ENCODE measurements at regions of chr18 and their contacts with region 1.

Region 1: DNA sequence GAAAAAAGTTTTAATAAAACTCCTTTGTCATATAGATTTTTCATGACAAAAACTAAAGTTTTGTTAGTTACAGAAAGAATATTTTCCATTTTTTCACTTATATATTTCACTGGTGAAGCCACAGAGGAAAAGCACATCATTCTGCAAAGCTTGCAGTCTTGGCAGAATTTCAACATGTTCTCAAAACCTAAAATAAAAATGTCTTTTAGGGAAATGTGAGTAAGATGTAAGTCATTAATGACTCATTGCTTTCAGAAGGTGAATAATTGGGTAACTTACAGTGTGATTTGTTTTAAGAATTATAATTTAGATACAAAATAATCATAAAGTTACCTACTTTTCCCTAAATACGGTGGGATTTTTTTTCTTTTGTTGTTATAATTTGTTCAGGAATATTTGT is 43.4 kb upstream of the TNFRSF11A start:
- DNase-seq: no peak
- ATAC-seq: peak; percentile 52
- H3K4me3 Mint-ChIP-seq: no peak overlapping the region
- H3K27ac Mint-ChIP-seq: no peak overlapping the region
- H3K4me1 Mint-ChIP-seq: peaks cover 32% of the 10 kb centered on the region
- H3K27me3 Mint-ChIP-seq: no peaks in the 10 kb centered on the region

Region 2: DNA sequence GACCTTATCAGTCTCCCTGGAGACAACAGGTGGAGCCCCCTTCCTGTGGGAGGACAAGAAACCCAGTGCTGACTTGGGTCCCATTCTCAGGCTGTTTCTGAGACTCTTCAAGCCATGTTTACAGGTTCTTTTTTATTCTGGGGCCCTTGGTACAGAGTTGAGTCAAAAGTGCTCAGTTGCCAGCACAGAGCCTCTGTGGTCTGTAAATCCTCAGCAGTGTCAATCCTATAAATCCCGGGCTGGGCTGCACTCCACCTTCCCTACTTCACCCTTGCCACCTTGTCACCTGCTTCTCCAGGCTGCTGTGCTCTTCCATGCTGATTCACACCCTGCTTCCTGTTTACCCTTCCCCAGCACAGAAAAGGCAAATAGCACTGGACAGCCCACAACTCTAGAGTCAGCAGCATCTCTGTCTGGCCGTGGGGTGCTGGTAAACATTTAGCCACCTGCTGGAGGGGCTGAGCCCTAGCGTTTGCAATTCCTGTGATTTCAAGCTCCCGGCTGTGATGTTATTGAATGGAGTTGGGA is 118.2 kb after region 1 on chr18:
- CTCF ChIA-PET with region 1: no interaction called
- POLR2A ChIA-PET with region 1: no interaction called
- intact Hi-C with region 1: loop called in 1 of 2 experiments (anchors 5 kb)
- DNase-seq: peak; percentile 11
- ATAC-seq: peak; percentile 21
- H3K4me3 Mint-ChIP-seq: no peak overlapping the region
- H3K27ac Mint-ChIP-seq: no peak overlapping the region
- H3K4me1 Mint-ChIP-seq: peaks cover 32% of the 10 kb centered on the region
- H3K27me3 Mint-ChIP-seq: peaks cover 4% of the 10 kb centered on the region

Measured in activated CD4-positive, alpha-beta T cell treated with anti-CD3 and anti-CD28 coated beads for 36 hours (primary cell).